Vagina (tissue), 2 donors: ENCODE measurements at regions of chr3 and their contacts with region 1.

Region 1: GRCh38 chr3:17288839-17289399 is 404.2 kb downstream of the PLCL2 start:
- DNase-seq: no peak
- H3K4me3 ChIP-seq: no peak overlapping the region
- H3K27ac ChIP-seq: no peak overlapping the region
- H3K4me1 ChIP-seq: no peaks in the 10 kb centered on the region
- H3K27me3 ChIP-seq: no peaks in the 10 kb centered on the region
- CTCF ChIP-seq: no peak
- POLR2A ChIP-seq: no peak

Region 2: GRCh38 chr3:17307482-17307881 is 18.6 kb after region 1 on chr3:
- intact Hi-C with region 1: loop called (anchors 1 kb)
- DNase-seq: no peak
- H3K4me3 ChIP-seq: no peak overlapping the region
- H3K27ac ChIP-seq: no peak overlapping the region
- H3K4me1 ChIP-seq: peaks cover 1% of the 10 kb centered on the region
- H3K27me3 ChIP-seq: no peaks in the 10 kb centered on the region
- CTCF ChIP-seq: no peak
- POLR2A ChIP-seq: no peak